Mammary epithelial cell (primary cell): ENCODE measurements at regions of chr7 and their contacts with region 1.

Region 1: DNA sequence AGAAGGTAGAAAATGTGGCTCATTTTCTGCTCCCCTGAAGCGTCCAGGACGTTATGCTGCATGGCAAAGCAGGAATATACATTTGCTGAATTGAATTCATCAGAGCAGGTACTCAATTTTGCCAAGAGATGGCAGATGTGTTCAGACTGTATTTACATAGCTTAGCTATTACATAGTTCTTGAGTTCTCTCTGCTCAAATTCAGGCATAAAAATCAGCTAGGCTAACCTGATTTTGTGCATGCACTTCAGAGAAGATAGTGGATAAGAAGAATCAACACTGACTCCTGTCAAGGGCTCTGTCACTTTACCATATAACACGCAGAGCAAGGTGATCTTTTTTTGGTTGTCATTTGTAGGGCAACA is 209.2 kb upstream of the FAM3C start:
- DNase-seq: peak; percentile 46
- H3K4me3 ChIP-seq: no peak overlapping the region
- H3K27ac ChIP-seq: no peak overlapping the region
- H3K4me1 ChIP-seq: peaks cover 12% of the 10 kb centered on the region
- H3K27me3 ChIP-seq: no peaks in the 10 kb centered on the region
- CTCF ChIP-seq: peak; percentile 32 to 68

Region 2: DNA sequence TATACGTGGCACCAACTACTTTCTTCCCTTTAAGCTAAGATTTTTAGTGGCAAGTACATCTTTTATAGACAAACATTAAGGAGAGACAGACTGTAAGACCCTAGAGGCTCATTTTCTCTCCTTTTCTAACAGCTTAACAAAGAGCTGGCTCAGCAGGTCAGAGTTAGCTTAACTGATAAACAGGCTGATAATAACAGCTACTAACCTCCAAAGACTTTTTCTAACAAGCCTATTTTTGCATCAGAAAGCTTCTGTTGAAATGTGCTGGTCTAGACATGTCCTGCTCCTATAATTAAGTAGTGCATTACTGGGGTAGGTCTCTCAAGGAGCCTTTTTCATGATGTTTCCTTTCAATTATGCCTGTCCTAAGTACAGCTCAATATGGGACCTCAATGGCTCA is 29.1 kb after region 1 on chr7:
- CTCF ChIA-PET with region 1: interaction called, 11 read pairs
- dilution Hi-C with region 1: no loop called
- in situ Hi-C with region 1: no loop called
- intact Hi-C with region 1: no loop called
- DNase-seq: peak; percentile 4
- H3K4me3 ChIP-seq: no peak overlapping the region
- H3K27ac ChIP-seq: no peak overlapping the region
- H3K4me1 ChIP-seq: no peaks in the 10 kb centered on the region
- H3K27me3 ChIP-seq: no peaks in the 10 kb centered on the region
- CTCF ChIP-seq: no peak